ENCODE measurements at regions of chr2 and their contacts with region 1.

Region 1: DNA sequence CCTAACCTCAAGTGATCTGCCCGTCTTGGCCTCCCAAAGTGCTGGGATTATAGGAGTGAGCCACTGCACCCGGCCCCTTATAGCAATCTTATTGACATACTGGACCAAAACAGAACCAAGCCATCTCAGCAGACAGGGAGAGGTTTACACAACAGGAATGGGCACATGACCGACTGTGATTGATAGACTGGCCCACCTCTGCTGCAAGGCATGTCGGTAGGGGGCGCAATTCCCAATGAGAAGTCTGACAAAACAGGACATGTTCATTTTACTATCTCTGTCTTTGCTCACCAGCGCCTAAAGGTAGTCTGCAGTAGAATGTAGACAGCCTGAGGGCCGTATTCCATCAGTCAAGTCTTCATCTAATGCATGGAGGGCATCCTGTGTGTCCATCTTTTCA is 2.0 kb downstream of the LYPD6B start:
- DNase-seq: no peak
- ATAC-seq: peak; percentile 78
- H3K4me3 ChIP-seq: no peak overlapping the region
- H3K27ac ChIP-seq: no peak overlapping the region
- H3K4me1 ChIP-seq: peaks cover 17% of the 10 kb centered on the region
- H3K27me3 ChIP-seq: no peaks in the 10 kb centered on the region
- CTCF ChIP-seq: peak; percentile 52 to 78 (median 77)
- EP300 ChIP-seq: no peak
- POLR2A ChIP-seq: no peak
- RAD21 ChIP-seq: peak; percentile 61

Region 2: DNA sequence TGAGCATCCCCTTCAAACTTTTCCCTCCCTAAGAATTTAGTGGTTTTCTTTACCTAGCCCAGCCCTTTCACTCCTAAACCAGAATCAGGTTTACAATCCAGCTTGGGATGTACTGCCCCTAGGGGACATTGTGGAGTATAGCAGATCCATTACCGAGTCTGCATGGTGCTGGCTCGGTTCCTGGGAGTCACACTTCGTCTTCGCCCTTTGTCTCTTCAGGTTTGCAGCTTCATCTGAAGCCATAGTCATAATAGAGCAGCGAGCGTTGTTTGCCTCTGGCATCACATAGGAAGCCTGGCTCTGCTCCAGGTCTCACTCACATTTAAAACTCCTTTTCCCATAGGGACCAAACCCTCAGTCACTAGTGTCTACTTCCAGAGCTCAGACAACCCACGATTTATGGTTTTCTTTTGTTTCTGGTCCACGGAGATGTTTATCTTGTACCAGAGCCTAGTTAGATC is 273.1 kb after region 1 on chr2:
- CTCF ChIA-PET with region 1: interaction called, 14 read pairs
- POLR2A ChIA-PET with region 1: no interaction called
- RAD21 ChIA-PET with region 1: no interaction called
- SMC1A ChIA-PET with region 1: no interaction called
- in situ Hi-C with region 1: no loop called
- intact Hi-C with region 1: loop called (anchors 5 kb)
- DNase-seq: peak; percentile 9
- ATAC-seq: peak; percentile 94
- H3K4me3 ChIP-seq: no peak overlapping the region
- H3K27ac ChIP-seq: no peak overlapping the region
- H3K4me1 ChIP-seq: no peaks in the 10 kb centered on the region
- H3K27me3 ChIP-seq: no peaks in the 10 kb centered on the region
- CTCF ChIP-seq: peak; percentile 61 to 80 (median 77)
- EP300 ChIP-seq: no peak
- POLR2A ChIP-seq: no peak
- RAD21 ChIP-seq: peak; percentile 77

Region 3: DNA sequence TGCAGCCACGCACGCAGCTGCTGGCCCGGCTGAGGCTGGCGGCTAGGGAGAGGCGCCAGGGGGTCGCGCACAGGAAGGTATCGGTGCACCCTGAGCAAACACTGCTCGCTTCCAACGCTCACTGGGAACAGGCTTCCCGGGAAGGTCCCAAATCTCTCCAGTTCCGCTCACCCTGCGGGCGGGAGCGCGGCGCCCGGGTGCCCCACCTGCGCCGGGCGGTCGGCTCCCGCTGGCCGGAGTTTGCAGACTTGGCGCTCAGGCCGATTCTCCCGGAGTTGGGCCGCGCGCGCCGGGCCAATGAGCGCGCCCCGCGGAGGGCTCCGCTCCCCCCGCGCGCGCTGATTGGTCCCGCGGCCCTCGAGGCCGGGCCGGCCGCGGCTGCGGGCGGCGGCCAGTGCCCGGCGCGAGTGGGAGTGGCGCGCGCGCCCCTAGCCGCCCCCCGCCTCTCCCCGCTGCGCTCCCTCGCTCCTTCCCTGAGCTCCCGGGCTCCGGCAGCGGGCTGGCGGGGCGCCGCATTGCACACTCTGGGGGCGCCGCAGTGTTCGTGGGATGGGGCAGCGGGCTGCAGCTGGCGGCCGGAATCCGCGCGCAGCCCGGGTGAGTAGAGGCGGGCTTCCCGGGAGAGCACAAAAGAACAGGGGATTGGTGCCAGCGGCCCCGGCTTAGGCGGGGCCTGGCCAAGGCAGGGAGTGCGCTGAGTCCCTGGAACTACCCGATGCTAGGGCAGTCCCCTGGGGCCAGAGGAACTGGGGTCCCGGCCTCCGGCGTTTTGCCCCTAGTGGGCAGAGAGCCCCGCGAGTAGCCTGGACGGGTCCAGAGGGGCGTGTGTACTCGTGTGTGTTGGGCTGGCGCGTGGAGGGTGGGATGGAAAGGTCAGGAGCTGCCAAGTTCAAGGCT is 289.9 kb after region 1 on chr2 and contains the start of gene LYPD6:
- CTCF ChIA-PET with region 1: no interaction called
- POLR2A ChIA-PET with region 1: no interaction called
- RAD21 ChIA-PET with region 1: no interaction called
- SMC1A ChIA-PET with region 1: no interaction called
- in situ Hi-C with region 1: no loop called
- intact Hi-C with region 1: loop called (anchors 5 kb)
- DNase-seq: no peak
- ATAC-seq: peak; percentile 92
- H3K4me3 ChIP-seq: peak within 1 kb of the TSS; percentile 75
- H3K27ac ChIP-seq: no peak within 1 kb of the TSS
- H3K4me1 ChIP-seq: no peaks in the 10 kb centered on the region
- H3K27me3 ChIP-seq: peaks cover 2 to 9% of the 10 kb centered on the region in 2 experiments
- CTCF ChIP-seq: no peak
- EP300 ChIP-seq: no peak
- POLR2A ChIP-seq: no peak
- RAD21 ChIP-seq: no peak
- polyA plus RNA-seq, gene LYPD6: not detected

Region 4: GRCh38 chr2:150339983-150340382 is 1299.5 kb after region 1 on chr2:
- CTCF ChIA-PET with region 1: no interaction called
- POLR2A ChIA-PET with region 1: no interaction called
- RAD21 ChIA-PET with region 1: no interaction called
- SMC1A ChIA-PET with region 1: no interaction called
- in situ Hi-C with region 1: no loop called
- intact Hi-C with region 1: loop called (anchors 10 kb)
- DNase-seq: no peak
- ATAC-seq: no peak
- H3K4me3 ChIP-seq: no peak overlapping the region
- H3K27ac ChIP-seq: no peak overlapping the region
- H3K4me1 ChIP-seq: no peaks in the 10 kb centered on the region
- H3K27me3 ChIP-seq: no peaks in the 10 kb centered on the region
- CTCF ChIP-seq: no peak
- EP300 ChIP-seq: no peak
- POLR2A ChIP-seq: no peak
- RAD21 ChIP-seq: no peak